ENCODE measurements at regions of chr3 and their contacts with region 1.

Region 1: GRCh38 chr3:58237238-58237940 is at the start of gene ABHD6:
- DNase-seq: peak; percentile 85
- H3K4me3 Mint-ChIP-seq: peak within 1 kb of the TSS; percentile 85
- H3K27ac Mint-ChIP-seq: peak within 1 kb of the TSS; percentile 62
- H3K4me1 Mint-ChIP-seq: peaks cover 8% of the 10 kb centered on the region
- H3K27me3 Mint-ChIP-seq: peaks cover 12% of the 10 kb centered on the region
- total RNA-seq, gene ABHD6: 3.9 to 4.1 TPM

Region 2: DNA sequence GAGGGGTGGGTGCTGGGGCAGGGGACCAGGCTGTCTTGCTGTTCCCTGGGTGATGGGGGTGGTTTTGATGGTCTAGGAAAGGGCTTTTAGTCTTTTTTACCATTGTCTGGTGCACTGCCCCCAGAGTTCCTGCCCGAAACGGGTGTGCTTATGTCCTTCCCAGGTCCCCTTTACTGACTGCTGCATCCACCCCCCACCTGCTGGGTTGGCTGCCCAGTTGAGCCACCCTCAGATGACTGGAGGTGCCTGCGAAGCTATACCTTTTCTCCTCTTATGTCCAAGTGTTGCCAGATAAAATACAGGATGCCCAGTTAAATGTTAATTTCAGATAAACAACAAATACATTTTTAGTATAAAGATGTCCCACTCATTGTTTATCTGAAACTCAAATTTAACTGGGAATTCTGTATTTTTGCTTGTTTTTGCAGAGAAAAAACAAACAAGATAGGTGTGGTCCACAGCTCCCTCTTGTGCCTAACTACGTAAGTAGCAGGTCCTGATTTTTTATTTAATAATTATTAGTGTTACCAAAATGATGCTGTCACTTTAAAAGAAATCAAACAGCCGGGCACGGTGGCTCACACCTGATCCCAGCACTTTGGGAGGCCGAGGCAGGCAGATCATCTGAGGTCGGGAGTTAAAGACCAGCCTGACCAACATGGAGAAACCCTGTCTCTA is 62.6 kb after region 1 on chr3:
- CTCF ChIA-PET with region 1: interaction called, 14 read pairs
- POLR2A ChIA-PET with region 1: no interaction called
- intact Hi-C with region 1: no loop called
- DNase-seq: no peak
- H3K4me3 Mint-ChIP-seq: no peak overlapping the region
- H3K27ac Mint-ChIP-seq: no peak overlapping the region
- H3K4me1 Mint-ChIP-seq: no peaks in the 10 kb centered on the region
- H3K27me3 Mint-ChIP-seq: peaks cover 19% of the 10 kb centered on the region

Region 3: DNA sequence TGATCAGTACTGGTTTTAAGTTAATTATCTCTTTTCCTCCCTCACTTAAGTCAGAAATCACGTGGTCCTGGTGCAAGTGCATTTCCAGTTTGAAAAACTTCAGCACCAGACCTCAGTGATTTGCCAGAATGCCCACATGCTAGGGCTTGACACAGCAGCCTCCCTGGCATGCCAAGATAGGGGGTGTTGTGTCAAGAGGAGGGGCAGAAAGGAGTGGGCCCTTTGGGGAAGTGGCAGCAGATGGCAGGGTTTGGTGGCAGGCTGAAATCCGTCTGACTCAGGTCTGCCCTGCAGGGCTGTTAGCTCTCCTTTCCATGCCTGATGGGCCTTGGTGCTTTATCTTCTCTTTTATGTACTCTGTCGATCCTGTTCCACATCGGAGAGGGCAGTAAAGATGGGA is 118.7 kb after region 1 on chr3:
- CTCF ChIA-PET with region 1: no interaction called
- POLR2A ChIA-PET with region 1: no interaction called
- intact Hi-C with region 1: no loop called
- DNase-seq: no peak
- H3K4me3 Mint-ChIP-seq: no peak overlapping the region
- H3K27ac Mint-ChIP-seq: no peak overlapping the region
- H3K4me1 Mint-ChIP-seq: peaks cover 40% of the 10 kb centered on the region
- H3K27me3 Mint-ChIP-seq: no peaks in the 10 kb centered on the region